Posterior cingulate gyrus (tissue), 11 donors: ENCODE measurements at regions of chr1 and their contacts with region 1.

Region 1: DNA sequence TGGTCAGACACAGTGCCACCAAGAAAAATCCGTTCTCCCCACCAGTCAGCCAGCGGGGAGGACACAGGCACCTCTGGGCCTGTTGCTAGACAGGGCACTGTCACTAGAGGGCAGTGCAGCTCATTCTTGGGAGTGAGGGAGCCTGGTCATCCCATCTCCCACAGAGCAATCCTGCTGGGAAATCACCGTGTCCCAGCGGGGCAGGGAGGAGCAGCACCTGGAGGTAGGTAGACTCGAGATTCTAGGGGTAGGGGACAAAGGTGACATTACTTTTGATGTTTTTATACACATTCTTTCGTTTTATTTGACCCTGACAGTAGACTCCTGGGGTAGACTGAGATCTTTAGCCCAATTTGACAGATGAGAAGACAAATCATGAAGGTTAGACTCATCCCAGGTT is 6.7 kb upstream of the CAMK1G start:
- DNase-seq: peak; percentile 72 to 97 (median 88)

Region 2: GRCh38 chr1:209534496-209535250 is 42.1 kb before region 1 on chr1:
- intact Hi-C with region 1: no loop called
- DNase-seq: no peak

Region 3: GRCh38 chr1:209565759-209566678 is 10.8 kb before region 1 on chr1:
- intact Hi-C with region 1: no loop called
- DNase-seq: peak; percentile 66 to 96 (median 83)

Region 4: GRCh38 chr1:209627732-209628196 is 51.0 kb after region 1 on chr1:
- intact Hi-C with region 1: loop called (anchors 5 kb)
- DNase-seq: peak; percentile 71 to 97 (median 88)

Region 5: GRCh38 chr1:209747580-209748262 is 170.9 kb after region 1 on chr1:
- intact Hi-C with region 1: loop called (anchors 5 kb)
- DNase-seq: peak; percentile 61 to 97 (median 78)